ENCODE measurements at regions of chr6 and their contacts with region 1.

Region 1: GRCh38 chr6:35624341-35625070 is 64.2 kb downstream of the FKBP5 start:
- DNase-seq: no peak
- ATAC-seq: no peak
- H3K4me3 Mint-ChIP-seq: no peak overlapping the region
- H3K27ac Mint-ChIP-seq: peak overlapping the region; percentile 2
- H3K4me1 Mint-ChIP-seq: peaks cover 8% of the 10 kb centered on the region
- H3K27me3 Mint-ChIP-seq: no peaks in the 10 kb centered on the region

Region 2: DNA sequence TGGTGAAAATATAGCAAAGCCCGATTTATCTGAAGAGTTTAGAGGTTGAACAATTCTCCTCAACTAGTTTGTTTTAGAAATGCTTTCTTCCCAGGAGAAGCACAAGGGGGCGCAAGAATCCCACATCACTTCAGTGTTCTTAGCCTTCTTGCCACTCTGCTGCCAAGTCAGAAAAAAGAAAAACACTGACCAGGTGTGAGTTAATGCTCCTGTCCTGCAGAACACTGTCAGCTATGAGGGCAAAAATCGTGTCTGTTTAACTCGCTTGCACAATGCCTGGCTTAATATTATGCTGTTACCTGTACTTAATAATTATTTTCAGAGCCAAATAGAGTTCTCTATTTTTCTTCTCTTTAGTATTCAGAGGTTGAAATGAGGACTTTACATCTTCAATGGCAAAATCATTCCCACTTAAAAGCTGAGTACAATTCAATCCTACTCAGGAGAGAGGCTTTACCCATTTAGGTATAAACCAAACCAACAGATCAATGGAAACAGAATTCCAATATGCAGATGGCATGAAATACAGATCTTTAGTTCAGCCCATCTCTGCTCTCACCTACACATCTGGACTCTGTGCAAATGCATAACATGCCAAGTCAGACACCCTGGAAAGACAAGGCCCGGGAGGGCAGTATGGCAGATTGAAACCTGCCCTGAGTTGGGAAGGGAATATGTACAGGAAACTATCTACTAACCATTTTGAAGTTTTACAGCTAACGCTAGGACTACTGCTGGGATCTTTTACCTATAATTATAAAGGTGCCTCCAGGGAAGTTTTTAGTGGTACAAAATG is 40.4 kb before region 1 on chr6:
- CTCF ChIA-PET with region 1: interaction called, 13 read pairs
- DNase-seq: peak; percentile 81
- ATAC-seq: peak; percentile 74
- H3K4me3 Mint-ChIP-seq: no peak overlapping the region
- H3K27ac Mint-ChIP-seq: peak overlapping the region; percentile 22
- H3K4me1 Mint-ChIP-seq: peaks cover 15% of the 10 kb centered on the region
- H3K27me3 Mint-ChIP-seq: no peaks in the 10 kb centered on the region

Region 3: GRCh38 chr6:35590622-35591066 is 33.9 kb before region 1 on chr6:
- CTCF ChIA-PET with region 1: interaction called, 13 read pairs
- DNase-seq: no peak
- ATAC-seq: no peak
- H3K4me3 Mint-ChIP-seq: no peak overlapping the region
- H3K27ac Mint-ChIP-seq: no peak overlapping the region
- H3K4me1 Mint-ChIP-seq: peaks cover 25% of the 10 kb centered on the region
- H3K27me3 Mint-ChIP-seq: no peaks in the 10 kb centered on the region

Region 4: DNA sequence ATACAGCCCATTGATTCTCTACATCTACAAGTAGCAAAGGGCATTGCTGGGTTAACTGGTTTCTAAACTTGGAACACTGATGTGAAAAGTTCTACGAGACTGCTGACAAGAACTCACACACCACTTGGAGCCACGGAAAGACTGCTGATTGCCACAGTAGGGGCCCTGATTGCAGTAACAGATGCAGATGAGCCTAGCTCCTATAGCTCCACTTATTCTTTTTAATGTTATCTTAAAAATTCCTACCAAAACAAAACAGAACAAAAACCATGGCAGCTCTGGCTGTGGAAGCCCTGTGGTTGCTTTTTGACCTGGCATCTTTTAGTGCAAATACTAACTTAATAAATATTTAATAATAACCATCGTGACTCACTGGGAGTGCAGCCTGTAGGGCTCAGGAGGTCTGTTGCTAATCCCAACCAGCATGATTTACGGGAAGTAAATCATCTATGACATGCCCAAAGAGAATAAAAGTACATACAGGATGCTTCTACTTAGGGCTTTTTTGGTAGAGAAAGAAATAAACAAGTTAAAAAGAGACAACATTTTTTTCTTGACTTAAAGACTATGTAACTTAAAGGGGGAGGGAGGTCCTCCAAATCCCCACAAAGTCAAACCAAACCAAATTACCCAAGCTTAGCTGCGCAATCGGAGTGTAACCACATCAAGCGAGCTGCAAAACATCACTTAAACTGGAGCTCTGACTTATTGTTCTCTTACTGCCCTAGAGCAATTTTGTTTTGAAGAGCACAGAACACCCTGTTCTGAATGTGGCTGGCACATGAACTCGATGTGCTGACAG is 23.0 kb before region 1 on chr6:
- CTCF ChIA-PET with region 1: interaction called, 17 read pairs
- DNase-seq: peak; percentile 67
- ATAC-seq: peak; percentile 76
- H3K4me3 Mint-ChIP-seq: peak overlapping the region; percentile 62
- H3K27ac Mint-ChIP-seq: peak overlapping the region; percentile 80
- H3K4me1 Mint-ChIP-seq: peaks cover 47% of the 10 kb centered on the region
- H3K27me3 Mint-ChIP-seq: no peaks in the 10 kb centered on the region